Heart right ventricle (tissue), 16 donors: ENCODE measurements at regions of chr1 and their contacts with region 1.

Region 1: DNA sequence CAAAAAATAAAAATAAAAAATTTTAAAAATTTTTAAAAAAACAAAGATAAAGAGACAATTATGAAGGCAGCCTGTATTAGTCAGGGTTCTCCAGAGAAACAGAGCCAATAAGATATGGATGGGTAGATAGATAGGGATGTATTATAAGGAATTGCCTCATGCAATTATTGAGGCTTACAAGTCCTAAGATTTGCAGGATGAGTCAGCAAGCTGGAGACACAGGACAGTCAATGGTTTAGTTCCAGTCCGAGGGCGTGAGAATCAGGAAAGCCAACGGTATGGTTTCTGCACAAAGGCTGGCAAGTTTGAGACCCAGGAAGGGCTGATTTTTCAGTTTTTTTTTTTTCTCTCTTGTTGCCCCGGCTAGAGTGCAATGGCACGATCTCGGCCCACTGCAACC is 24.1 kb upstream of the EIF4G3 start:
- DNase-seq: no peak
- ATAC-seq: no peak
- H3K4me3 ChIP-seq: no peak overlapping the region
- H3K27ac ChIP-seq: no peak overlapping the region
- H3K4me1 ChIP-seq: no peaks in the 10 kb centered on the region
- H3K27me3 ChIP-seq: peaks cover 0 to 4% (median 0%) of the 10 kb centered on the region in 7 donors
- CTCF ChIP-seq: no peak

Region 2: DNA sequence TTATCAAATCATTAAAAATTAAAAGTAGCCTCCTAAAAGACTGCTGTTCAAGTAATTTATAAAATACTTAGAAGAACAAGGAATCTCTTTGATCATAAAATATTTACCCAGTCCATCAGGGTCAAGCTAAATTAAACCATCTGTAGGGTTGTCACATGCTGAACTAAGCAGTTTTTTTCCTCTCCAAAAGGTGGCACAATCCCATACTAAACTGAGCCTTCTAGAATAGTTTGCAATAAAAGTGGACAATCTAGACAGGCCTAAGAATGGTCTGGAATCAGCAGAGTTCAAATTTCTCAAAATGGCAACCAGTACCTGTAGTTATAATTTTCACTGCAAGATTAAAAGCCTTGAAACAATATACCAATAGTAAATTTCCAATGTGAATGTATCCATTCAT is 218.9 kb before region 1 on chr1:
- intact Hi-C with region 1: loop called in 8 of 10 experiments (anchors 2 to 10 kb)
- DNase-seq: no peak
- ATAC-seq: peak in 5 of 8 donors; percentile 61 to 78 (median 63)
- H3K4me3 ChIP-seq: no peak overlapping the region
- H3K27ac ChIP-seq: peak overlapping the region in 1 of 10 donors; percentile 23
- H3K4me1 ChIP-seq: peaks cover 0 to 11% (median 0%) of the 10 kb centered on the region in 9 donors
- H3K27me3 ChIP-seq: no peaks in the 10 kb centered on the region
- CTCF ChIP-seq: peak in 7 of 9 donors; percentile 21 to 65 (median 44)

Region 3: DNA sequence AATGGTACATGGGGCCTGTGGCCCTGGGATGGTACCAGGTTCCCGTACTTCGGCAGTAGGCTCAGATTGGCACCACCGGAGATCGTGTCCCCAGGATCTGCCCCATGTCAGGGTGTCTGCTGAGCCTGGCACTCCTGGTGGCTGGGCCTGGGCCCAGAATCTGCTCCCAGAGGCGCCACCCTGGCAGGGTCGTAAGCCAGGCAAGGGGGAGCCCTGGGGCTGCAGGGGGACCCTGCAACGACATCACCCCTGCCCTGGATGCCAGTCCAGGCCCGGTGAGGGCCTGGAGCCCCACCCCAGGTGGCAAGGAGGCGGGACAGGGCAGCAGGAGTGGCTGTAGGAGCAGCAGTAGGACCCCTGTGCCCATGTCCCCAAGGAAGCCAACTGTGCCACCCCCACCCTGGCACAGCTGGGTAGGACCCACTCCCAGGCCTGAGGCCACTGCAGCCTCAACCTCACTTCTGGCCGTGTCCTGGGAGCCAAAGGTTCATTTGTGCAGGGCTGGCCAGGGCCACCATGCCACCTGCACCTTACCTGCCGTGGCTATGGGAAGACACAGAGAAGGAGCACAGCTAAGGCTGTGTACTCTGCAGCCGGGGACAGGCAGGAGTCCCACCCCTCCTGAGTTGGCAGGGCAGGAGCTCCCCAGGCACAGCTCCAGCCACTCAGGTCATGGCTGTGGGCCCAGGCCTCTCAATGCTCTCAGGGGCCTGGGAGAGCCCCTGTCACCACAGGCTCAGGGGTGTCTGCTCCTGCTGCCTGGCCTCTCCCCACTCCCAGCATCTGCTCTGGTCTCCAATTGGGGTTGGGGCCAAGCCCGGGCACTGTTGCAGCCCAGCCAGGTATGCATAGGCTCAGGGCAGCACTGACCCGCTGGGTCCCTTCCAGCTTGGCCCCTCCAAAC is 165.8 kb before region 1 on chr1:
- intact Hi-C with region 1: no loop called
- DNase-seq: peak; percentile 69 to 76
- ATAC-seq: peak; percentile 94 to 99 (median 97)
- H3K4me3 ChIP-seq: peak overlapping the region in 3 of 10 donors; percentile 7 to 21 (median 10)
- H3K27ac ChIP-seq: peak overlapping the region in 3 of 10 donors; percentile 8 to 34 (median 18)
- H3K4me1 ChIP-seq: peaks cover 5 to 39% (median 13%) of the 10 kb centered on the region in 9 donors
- H3K27me3 ChIP-seq: no peaks in the 10 kb centered on the region
- CTCF ChIP-seq: no peak